ENCODE measurements at regions of chr13 and their contacts with region 1.

Region 1: DNA sequence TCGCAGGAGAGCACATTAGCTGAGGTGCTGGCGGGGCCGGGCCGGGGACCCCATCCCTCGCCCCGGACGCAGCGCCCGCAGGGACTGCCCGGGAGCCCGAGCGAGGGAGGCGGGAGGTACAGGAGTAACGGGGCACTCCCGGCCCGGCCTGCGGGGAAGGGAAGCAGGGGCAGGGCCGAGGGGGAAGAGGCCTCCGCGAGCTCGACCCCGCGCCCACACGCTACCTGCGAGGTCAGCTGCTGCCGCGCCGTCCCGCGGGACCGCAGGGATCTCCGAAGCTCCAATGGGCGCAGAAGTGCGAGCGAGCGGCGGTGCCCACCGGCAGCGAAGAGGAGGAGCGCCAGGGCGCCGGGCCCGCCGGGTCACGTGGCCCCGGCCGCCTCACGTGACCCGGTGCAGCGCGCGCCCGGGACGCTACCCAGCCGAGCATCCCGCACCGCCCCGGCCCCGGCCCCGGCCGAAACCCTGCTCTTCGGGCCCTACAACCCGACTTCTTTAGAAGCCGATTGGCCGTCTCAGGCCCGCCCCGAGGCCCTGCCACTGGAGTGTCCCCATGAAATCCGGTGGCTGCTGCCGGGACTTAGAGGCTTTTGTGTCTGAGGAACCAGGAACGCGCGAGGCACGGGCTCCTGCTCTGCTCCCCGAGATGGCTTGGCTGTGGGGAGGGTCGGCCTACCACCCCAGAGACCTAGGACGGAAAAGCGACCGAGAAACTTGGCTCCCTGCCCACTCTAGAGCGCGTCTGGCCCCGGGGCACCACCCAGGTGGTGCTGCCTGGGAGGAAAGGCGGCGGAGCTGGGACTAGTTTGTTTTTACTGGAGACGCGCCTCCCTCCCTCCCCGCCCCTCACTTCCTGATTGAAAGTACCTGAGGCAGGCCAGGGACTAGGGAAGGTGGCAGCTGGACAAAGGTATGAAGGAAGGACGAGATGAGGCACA is at the start of gene RCBTB1:
- DNase-seq: peak; percentile 60
- H3K4me3 Mint-ChIP-seq: peak within 1 kb of the TSS; percentile 90
- H3K27ac Mint-ChIP-seq: peak within 1 kb of the TSS; percentile 93
- H3K4me1 Mint-ChIP-seq: peaks cover 20% of the 10 kb centered on the region
- H3K27me3 Mint-ChIP-seq: peaks cover 2% of the 10 kb centered on the region
- total RNA-seq, gene RCBTB1: 14.9 and 16.3 TPM in 2 replicates

Region 2: GRCh38 chr13:49247643-49248621 is 337.6 kb before region 1 on chr13 and contains the start of gene CDADC1:
- intact Hi-C with region 1: loop called (anchors 5 kb)
- DNase-seq: peak; percentile 90
- H3K4me3 Mint-ChIP-seq: peak within 1 kb of the TSS; percentile 97
- H3K27ac Mint-ChIP-seq: peak within 1 kb of the TSS; percentile 97
- H3K4me1 Mint-ChIP-seq: peaks cover 40% of the 10 kb centered on the region
- H3K27me3 Mint-ChIP-seq: peaks cover 14% of the 10 kb centered on the region
- total RNA-seq, gene CDADC1: 8.1 and 9.5 TPM in 2 replicates

Region 3: GRCh38 chr13:49300739-49301589 is 284.5 kb before region 1 on chr13:
- intact Hi-C with region 1: loop called (anchors 1 kb)
- DNase-seq: peak; percentile 61
- H3K4me3 Mint-ChIP-seq: peak overlapping the region; percentile 10
- H3K27ac Mint-ChIP-seq: peak overlapping the region; percentile 65
- H3K4me1 Mint-ChIP-seq: peaks cover 14% of the 10 kb centered on the region
- H3K27me3 Mint-ChIP-seq: no peaks in the 10 kb centered on the region

Region 4: DNA sequence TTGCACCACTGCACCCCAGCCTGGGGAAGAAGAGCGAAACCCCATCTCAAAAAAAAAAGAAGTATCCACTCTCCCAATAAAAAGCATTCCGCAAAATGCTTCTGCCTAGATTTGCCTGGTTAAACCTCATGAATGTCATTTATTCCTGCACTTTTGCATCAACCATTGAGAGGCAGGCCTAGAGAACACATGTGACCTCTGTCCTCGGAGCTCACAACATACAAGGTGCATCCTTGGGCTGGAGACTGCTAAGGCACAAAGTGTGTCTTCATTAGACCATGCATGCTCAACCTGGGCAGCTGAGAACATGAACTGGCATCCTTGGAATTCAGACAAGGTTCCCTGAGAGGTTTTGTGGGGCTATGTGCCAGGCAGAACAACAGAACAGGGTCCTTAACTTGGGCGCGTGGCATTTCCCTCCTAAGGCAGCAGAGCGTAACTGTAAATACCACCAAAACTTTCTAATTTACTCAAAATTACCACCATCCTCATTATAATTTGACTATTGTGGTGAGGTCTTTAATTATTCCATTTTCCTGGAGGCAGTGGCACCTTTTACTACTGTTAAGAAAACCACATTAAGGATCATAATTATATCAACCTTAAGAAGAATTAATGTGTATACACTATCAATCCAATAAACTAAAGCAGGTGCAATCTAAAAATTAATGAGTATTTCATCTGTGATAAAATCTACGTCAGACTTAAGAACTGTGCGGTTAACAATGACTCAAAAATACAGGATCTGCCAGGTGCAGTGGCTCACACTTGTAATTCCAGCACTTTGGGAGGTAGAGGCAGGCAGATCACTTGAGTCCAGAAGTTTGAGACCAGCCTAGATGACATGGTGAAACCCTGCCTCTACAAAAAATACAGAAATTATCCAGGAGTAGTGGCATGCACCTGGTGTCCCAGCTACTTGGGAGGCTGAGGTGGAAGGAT is 13.9 kb before region 1 on chr13:
- intact Hi-C with region 1: loop called (anchors 1 kb)
- DNase-seq: no peak
- H3K4me3 Mint-ChIP-seq: no peak overlapping the region
- H3K27ac Mint-ChIP-seq: no peak overlapping the region
- H3K4me1 Mint-ChIP-seq: peaks cover 14% of the 10 kb centered on the region
- H3K27me3 Mint-ChIP-seq: no peaks in the 10 kb centered on the region

Region 5: GRCh38 chr13:49606747-49607648 is 21.5 kb after region 1 on chr13:
- intact Hi-C with region 1: loop called (anchors 1 kb)
- DNase-seq: peak; percentile 69
- H3K4me3 Mint-ChIP-seq: peak overlapping the region; percentile 80
- H3K27ac Mint-ChIP-seq: peak overlapping the region; percentile 76
- H3K4me1 Mint-ChIP-seq: peaks cover 13% of the 10 kb centered on the region
- H3K27me3 Mint-ChIP-seq: no peaks in the 10 kb centered on the region

Region 6: DNA sequence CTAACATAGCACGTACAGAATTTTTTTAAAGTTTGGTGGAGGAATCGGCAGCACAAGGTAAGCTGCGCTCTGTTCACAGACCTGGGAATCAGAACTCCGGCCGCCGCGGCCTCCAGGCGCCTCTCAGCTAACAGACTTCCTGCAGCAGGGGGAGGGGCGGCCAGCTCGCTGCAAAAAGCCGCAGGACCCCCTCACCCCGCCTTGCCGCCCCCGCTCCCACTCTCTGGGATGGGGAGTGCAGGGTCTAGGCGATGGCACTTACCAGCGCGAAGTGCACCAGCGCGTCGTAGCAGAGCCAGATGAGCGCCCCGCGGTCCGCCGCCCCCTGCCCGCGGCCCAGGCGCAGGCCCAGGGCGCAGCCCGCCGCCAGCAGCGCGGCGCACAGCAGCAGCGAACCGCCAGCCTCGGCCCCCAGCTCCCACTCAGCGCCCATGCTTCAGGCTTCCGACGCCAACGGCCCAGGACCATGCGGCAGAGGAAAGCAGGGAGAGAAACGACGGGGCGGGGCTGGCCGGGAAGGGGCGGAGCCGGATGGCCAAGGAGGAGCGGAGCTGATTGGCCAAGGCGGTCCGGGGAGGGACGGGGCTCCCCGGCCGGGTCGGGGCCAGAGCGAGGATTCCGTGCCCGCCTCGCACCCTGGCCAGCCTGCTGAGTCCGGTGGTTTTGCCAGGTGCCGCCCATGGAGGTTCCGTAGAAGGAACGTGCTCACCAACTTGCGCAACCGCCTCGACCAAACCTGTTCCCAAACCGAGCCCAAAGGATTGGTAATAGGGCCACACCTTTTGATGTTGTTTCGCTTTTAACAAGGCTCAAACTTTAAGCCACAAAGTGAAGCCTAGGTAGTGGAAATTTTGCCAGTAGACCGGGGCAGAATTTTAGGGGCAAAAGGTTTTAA is 105.8 kb after region 1 on chr13 and contains the start of gene EBPL:
- intact Hi-C with region 1: loop called (anchors 5 kb)
- DNase-seq: peak; percentile 83
- H3K4me3 Mint-ChIP-seq: peak within 1 kb of the TSS; percentile 92
- H3K27ac Mint-ChIP-seq: peak within 1 kb of the TSS; percentile 77
- H3K4me1 Mint-ChIP-seq: peaks cover 34% of the 10 kb centered on the region
- H3K27me3 Mint-ChIP-seq: no peaks in the 10 kb centered on the region
- total RNA-seq, gene EBPL: 42.6 and 44.6 TPM in 2 replicates

Region 7: DNA sequence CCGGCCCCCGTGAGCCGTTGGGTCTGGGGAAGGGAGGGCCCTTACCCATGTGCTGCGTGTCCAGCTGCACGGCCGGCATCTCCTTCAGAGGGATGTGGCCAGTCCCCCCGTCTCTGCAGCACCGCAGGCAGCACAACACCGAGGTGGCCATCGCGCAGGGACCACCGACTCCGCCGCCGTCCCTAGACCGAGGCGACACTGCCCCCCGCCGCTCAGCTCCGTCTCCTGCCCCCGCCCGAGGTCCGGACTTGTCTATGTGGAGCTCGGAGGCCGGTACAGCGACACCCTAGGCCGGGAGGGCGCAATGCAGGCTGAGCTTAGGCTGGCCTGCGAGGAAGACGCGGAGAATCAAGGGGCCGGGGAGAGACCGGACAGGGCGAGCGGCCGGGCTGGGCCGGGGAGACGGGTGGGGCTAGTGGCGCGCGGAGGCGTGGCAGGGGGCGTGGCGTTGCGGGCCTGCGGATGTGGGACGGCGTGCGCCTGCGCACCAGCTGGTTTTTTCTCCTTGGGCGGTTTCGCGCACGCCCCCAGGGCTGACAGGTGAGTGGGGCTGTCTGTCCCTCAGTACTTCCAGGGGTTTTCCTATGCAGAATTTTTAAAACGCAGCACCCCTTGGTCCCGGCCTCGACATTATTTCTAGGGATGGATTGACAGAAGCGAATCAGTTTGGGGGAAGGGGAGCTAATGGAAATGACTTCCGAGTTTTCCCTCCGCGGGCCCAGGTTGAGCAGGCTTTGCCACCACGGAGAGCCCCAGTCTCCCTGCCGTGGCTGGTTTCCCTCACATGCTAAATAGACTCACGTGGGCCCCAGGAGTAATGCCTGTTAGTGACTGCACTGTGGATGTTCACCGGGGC is 350.8 kb after region 1 on chr13 and contains the start of gene SPRYD7:
- intact Hi-C with region 1: loop called (anchors 5 kb)
- DNase-seq: peak; percentile 92
- H3K4me3 Mint-ChIP-seq: peak within 1 kb of the TSS; percentile 94
- H3K27ac Mint-ChIP-seq: peak within 1 kb of the TSS; percentile 87
- H3K4me1 Mint-ChIP-seq: peaks cover 11% of the 10 kb centered on the region
- H3K27me3 Mint-ChIP-seq: peaks cover 22% of the 10 kb centered on the region
- total RNA-seq, gene SPRYD7: 6.9 and 7.0 TPM in 2 replicates